PC-9 (cell line): ENCODE measurements at regions of chr9 and their contacts with region 1.

Region 1: GRCh38 chr9:95510709-95511615 is 5.8 kb downstream of the PTCH1 start:
- DNase-seq: peak; percentile 84 to 98
- H3K4me3 ChIP-seq: peak overlapping the region; percentile 98
- H3K27ac ChIP-seq: peak overlapping the region; percentile 80
- H3K4me1 ChIP-seq: peaks cover 12% of the 10 kb centered on the region; the same call in 1 of the 2 replicates
- H3K27me3 ChIP-seq: no peaks in the 10 kb centered on the region
- CTCF ChIP-seq: no peak

Region 2: GRCh38 chr9:95181226-95181818 is 329.6 kb before region 1 on chr9:
- CTCF ChIA-PET with region 1: no interaction called
- POLR2A ChIA-PET with region 1: no interaction called
- intact Hi-C with region 1: no loop called
- DNase-seq: no peak
- H3K4me3 ChIP-seq: no peak overlapping the region
- H3K27ac ChIP-seq: no peak overlapping the region
- H3K4me1 ChIP-seq: no peaks in the 10 kb centered on the region
- H3K27me3 ChIP-seq: no peaks in the 10 kb centered on the region
- CTCF ChIP-seq: peak; percentile 77

Region 3: GRCh38 chr9:95268681-95269080 is 242.3 kb before region 1 on chr9:
- CTCF ChIA-PET with region 1: no interaction called
- POLR2A ChIA-PET with region 1: interaction called, 16 read pairs
- intact Hi-C with region 1: no loop called
- DNase-seq: no peak
- H3K4me3 ChIP-seq: no peak overlapping the region
- H3K27ac ChIP-seq: no peak overlapping the region
- H3K4me1 ChIP-seq: no peaks in the 10 kb centered on the region
- H3K27me3 ChIP-seq: no peaks in the 10 kb centered on the region
- CTCF ChIP-seq: no peak

Region 4: GRCh38 chr9:95383185-95383673 is 127.7 kb before region 1 on chr9:
- CTCF ChIA-PET with region 1: no interaction called
- POLR2A ChIA-PET with region 1: interaction called, 9 read pairs
- intact Hi-C with region 1: loop called (anchors 2 kb)
- DNase-seq: peak; percentile 83 to 99
- H3K4me3 ChIP-seq: peak overlapping the region; percentile 30; the same call in 1 of the 2 replicates
- H3K27ac ChIP-seq: peak overlapping the region; percentile 99
- H3K4me1 ChIP-seq: peaks cover 61% of the 10 kb centered on the region
- H3K27me3 ChIP-seq: no peaks in the 10 kb centered on the region
- CTCF ChIP-seq: no peak

Region 5: DNA sequence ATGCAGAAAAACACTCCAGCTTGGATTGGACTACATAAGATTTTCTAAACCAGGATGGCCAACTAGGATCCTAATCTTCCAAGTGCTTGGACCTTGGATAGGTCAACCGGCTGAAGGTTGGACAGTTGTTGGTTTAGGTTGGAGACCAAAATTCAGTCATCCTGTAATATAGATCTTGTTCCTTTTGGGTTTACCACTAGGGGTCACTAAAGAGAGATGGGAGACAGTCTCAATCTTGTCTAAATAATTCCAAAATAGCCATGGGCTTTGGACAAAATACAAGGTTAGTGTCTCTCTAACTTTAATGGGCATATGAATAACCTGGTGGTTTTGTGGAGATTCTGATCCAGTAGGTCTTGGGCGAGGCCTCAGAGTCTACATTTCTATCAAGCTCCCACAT is 215.8 kb after region 1 on chr9:
- CTCF ChIA-PET with region 1: no interaction called
- POLR2A ChIA-PET with region 1: no interaction called
- intact Hi-C with region 1: loop called (anchors 10 kb)
- DNase-seq: no peak
- H3K4me3 ChIP-seq: no peak overlapping the region
- H3K27ac ChIP-seq: no peak overlapping the region
- H3K4me1 ChIP-seq: no peaks in the 10 kb centered on the region
- H3K27me3 ChIP-seq: peaks cover 47% of the 10 kb centered on the region; the same call in 1 of the 2 replicates
- CTCF ChIP-seq: peak; percentile 74

Region 6: GRCh38 chr9:96217754-96218693 is 707.1 kb after region 1 on chr9:
- CTCF ChIA-PET with region 1: no interaction called
- POLR2A ChIA-PET with region 1: interaction called, 8 read pairs
- intact Hi-C with region 1: loop called (anchors 2 kb)
- DNase-seq: peak; percentile 39 to 78
- H3K4me3 ChIP-seq: no peak overlapping the region
- H3K27ac ChIP-seq: no peak overlapping the region
- H3K4me1 ChIP-seq: no peaks in the 10 kb centered on the region
- H3K27me3 ChIP-seq: peaks cover 24% of the 10 kb centered on the region
- CTCF ChIP-seq: peak; percentile 85